Activated CD4-positive, alpha-beta T cell treated with anti-CD3 and anti-CD28 coated beads for 36 hours (primary cell): ENCODE measurements at regions of chr4 and their contacts with region 1.

Region 1: GRCh38 chr4:87465739-87466366 is 43.5 kb downstream of the NUDT9 start:
- DNase-seq: no peak
- ATAC-seq: no peak
- H3K4me3 Mint-ChIP-seq: no peak overlapping the region
- H3K27ac Mint-ChIP-seq: no peak overlapping the region
- H3K4me1 Mint-ChIP-seq: no peaks in the 10 kb centered on the region
- H3K27me3 Mint-ChIP-seq: no peaks in the 10 kb centered on the region

Region 2: DNA sequence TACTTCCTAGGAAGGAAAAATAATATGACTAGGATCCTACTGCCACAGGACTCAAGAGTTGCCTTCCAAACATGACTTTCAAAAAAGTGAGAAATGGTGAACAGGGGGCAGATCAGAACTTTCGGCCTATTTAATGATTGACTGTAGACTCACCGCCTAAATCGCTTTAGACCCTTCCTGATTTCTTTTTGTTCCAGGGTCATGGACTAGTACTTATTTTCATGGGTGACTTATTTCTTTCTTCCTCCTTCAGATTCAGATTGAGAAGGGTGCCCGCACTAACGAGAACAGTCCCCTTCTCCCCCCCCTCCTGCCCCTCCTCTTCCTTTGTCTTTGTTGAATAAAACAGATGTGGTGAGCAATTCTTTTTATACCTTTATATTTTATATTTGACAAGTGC is 197.4 kb before region 1 on chr4:
- CTCF ChIA-PET with region 1: no interaction called
- POLR2A ChIA-PET with region 1: no interaction called
- intact Hi-C with region 1: loop called in 1 of 2 experiments (anchors 2 kb)
- DNase-seq: no peak
- ATAC-seq: no peak
- H3K4me3 Mint-ChIP-seq: no peak overlapping the region
- H3K27ac Mint-ChIP-seq: no peak overlapping the region
- H3K4me1 Mint-ChIP-seq: no peaks in the 10 kb centered on the region
- H3K27me3 Mint-ChIP-seq: peaks cover 2% of the 10 kb centered on the region

Region 3: DNA sequence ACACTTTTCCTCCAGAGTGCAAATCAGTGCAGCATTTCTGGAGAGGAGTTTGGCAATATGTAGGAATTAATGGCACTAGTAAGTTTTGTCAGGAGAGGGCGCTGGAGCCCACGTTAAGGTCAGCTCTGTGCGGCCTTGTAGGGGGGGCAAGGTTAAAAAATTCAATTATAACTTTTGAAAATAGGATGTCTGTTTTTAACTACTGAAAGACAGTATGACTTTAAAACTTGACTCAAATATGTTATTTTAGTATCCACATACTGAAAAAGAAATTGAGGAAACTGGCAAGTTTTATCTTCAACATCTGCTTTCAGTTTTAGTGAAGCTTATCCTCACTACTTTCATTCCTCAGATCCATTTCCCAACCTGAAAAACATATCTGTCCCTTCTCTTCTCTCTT is 112.3 kb before region 1 on chr4:
- CTCF ChIA-PET with region 1: interaction called, 58 read pairs
- POLR2A ChIA-PET with region 1: no interaction called
- intact Hi-C with region 1: loop called (anchors 5 kb)
- DNase-seq: peak; percentile 69
- ATAC-seq: peak; percentile 74
- H3K4me3 Mint-ChIP-seq: no peak overlapping the region
- H3K27ac Mint-ChIP-seq: no peak overlapping the region
- H3K4me1 Mint-ChIP-seq: peaks cover 2% of the 10 kb centered on the region
- H3K27me3 Mint-ChIP-seq: no peaks in the 10 kb centered on the region

Region 4: DNA sequence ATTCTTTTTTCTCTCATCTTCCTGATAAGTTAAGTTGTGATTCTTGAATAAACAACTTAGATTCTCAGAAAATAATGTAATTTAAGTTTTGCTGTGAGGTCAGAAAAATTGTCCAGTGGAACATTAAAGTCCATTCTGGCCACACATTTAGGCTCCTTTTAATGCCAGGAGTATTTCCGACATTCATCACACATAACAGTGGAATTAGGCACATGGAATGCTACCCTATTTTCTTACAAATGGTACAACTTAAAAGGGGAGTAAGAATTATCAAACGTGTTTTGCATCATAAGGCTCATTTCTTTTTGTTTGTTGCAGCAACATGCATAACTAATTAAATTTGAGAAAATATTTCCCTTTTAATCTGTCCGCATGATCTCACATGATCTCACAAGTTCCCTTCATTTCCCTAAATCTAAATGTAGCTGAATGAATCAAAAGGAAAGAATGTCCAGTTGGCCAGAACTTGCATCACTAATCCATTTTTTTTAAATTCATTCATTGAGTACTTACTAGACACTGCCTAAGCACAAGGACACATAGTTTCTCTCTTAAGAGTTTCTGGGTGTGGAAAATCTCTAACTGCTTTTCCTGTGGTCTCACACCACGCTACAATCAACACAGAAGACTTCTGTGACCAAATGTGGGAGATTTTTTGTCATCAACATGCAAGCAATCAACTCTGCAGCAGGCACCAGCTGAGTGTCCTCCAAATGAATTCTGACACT is 41.3 kb after region 1 on chr4:
- CTCF ChIA-PET with region 1: no interaction called
- POLR2A ChIA-PET with region 1: no interaction called
- intact Hi-C with region 1: no loop called
- DNase-seq: no peak
- ATAC-seq: no peak
- H3K4me3 Mint-ChIP-seq: no peak overlapping the region
- H3K27ac Mint-ChIP-seq: no peak overlapping the region
- H3K4me1 Mint-ChIP-seq: no peaks in the 10 kb centered on the region
- H3K27me3 Mint-ChIP-seq: peaks cover 2% of the 10 kb centered on the region

Region 5: DNA sequence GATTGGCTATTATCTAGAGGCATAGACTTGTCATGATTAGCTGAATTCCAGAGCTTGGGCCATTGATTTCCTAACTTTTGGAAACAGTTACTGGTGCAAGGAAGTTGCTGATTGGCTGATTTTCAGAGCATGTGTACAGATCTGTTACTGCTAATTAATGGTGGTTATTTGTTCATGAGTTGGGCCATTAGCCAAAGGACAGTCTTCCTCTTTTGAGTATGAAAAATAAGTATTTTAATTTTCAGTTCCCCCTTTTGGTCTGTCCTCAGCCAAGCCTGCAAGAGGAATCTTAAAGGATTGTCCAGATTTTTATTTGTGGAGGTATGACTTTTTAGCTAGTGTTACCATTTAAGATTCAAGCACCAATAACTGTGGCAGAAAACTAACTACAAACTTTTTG is 135.5 kb after region 1 on chr4:
- CTCF ChIA-PET with region 1: no interaction called
- POLR2A ChIA-PET with region 1: no interaction called
- intact Hi-C with region 1: no loop called
- DNase-seq: no peak
- ATAC-seq: no peak
- H3K4me3 Mint-ChIP-seq: no peak overlapping the region
- H3K27ac Mint-ChIP-seq: no peak overlapping the region
- H3K4me1 Mint-ChIP-seq: no peaks in the 10 kb centered on the region
- H3K27me3 Mint-ChIP-seq: peaks cover 24% of the 10 kb centered on the region